ENCODE measurements at regions of chr14 and their contacts with region 1.

Region 1: GRCh38 chr14:35046048-35046741 is at the start of gene FAM177A1:
- DNase-seq: peak; percentile 92 to 96 (median 93)
- ATAC-seq: peak; percentile 96
- H3K4me3 ChIP-seq: peak within 1 kb of the TSS; percentile 69
- H3K27ac ChIP-seq: peak within 1 kb of the TSS; percentile 86
- H3K4me1 ChIP-seq: peaks cover 9 to 16% of the 10 kb centered on the region in 2 experiments; a peak in 4 of 5 replicates
- H3K27me3 ChIP-seq: no peaks in the 10 kb centered on the region
- CTCF ChIP-seq: no peak
- EP300 ChIP-seq: no peak
- POLR2A ChIP-seq: peak; percentile 88
- RAD21 ChIP-seq: no peak
- polyA plus RNA-seq, gene FAM177A1: 7.7 to 12.1 TPM

Region 2: DNA sequence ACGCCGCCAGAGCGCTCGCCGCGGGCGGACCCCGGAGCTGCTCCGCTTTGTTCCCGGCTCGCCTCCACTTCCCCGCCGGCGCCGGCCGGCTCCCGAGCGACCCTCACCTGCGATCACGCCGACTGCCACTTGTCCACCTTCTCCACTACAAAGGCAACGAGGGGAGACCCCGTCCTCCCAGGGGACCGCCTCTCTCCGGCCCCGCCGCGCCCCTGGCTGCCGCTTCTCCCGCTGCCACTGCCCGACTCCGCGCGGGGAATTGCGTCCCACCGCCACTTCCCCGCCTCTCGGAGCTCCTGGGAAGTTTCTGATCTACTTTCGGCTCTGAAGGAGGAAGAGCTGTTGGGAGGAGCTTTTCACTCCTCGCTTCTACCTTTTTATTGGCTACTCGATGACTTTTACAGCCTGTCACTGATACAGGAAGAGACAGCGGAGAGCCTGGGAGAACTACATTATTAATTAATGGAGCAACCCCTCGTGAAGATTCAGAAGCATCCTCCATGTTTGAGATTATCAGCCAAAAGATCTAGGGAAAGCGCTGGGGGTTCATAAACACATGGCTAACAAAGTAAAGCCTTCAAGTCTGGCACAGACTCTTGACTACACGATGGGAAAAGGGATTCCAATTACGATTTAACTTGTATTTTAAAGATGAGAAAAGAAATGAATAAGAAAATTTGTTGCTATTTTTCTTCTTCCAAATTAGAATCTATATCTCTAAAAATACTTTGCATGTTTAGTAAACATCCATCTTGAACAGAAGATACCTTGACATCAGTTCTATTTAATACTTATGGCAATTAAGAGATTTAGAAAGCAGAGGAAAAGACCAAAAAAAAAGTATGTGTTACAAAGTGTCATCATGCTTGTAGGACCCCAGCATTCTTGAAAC is 170.9 kb before region 1 on chr14 and contains the start of gene BAZ1A:
- CTCF ChIA-PET with region 1: no interaction called
- POLR2A ChIA-PET with region 1: interaction called, 4 read pairs
- in situ Hi-C with region 1: no loop called
- intact Hi-C with region 1: loop called (anchors 1 kb)
- DNase-seq: peak; percentile 69 to 81 (median 70)
- ATAC-seq: peak; percentile 44
- H3K4me3 ChIP-seq: peak within 1 kb of the TSS; percentile 96
- H3K27ac ChIP-seq: peak within 1 kb of the TSS; percentile 98
- H3K4me1 ChIP-seq: peaks cover 6 to 11% of the 10 kb centered on the region in 2 experiments; a peak in 4 of 5 replicates
- H3K27me3 ChIP-seq: no peaks in the 10 kb centered on the region
- CTCF ChIP-seq: no peak
- EP300 ChIP-seq: no peak; the same call in 1 of the 2 replicates
- POLR2A ChIP-seq: peak; percentile 90
- RAD21 ChIP-seq: no peak
- polyA plus RNA-seq, gene BAZ1A: 22.0 to 23.6 TPM

Region 3: GRCh38 chr14:34888186-34888585 is 158.0 kb before region 1 on chr14:
- CTCF ChIA-PET with region 1: no interaction called
- POLR2A ChIA-PET with region 1: no interaction called
- in situ Hi-C with region 1: no loop called
- intact Hi-C with region 1: no loop called
- DNase-seq: no peak
- ATAC-seq: no peak
- H3K4me3 ChIP-seq: no peak overlapping the region
- H3K27ac ChIP-seq: no peak overlapping the region
- H3K4me1 ChIP-seq: no peaks in the 10 kb centered on the region
- H3K27me3 ChIP-seq: no peaks in the 10 kb centered on the region
- CTCF ChIP-seq: no peak
- EP300 ChIP-seq: no peak
- POLR2A ChIP-seq: no peak
- RAD21 ChIP-seq: no peak

Region 4: GRCh38 chr14:34982417-34983147 is 63.6 kb before region 1 on chr14 and contains the start of gene SRP54:
- CTCF ChIA-PET with region 1: no interaction called
- POLR2A ChIA-PET with region 1: interaction called, 3 read pairs
- in situ Hi-C with region 1: no loop called
- intact Hi-C with region 1: loop called (anchors 1 kb)
- DNase-seq: peak; percentile 94 to 97 (median 96)
- ATAC-seq: peak; percentile 88
- H3K4me3 ChIP-seq: peak within 1 kb of the TSS; percentile 59
- H3K27ac ChIP-seq: peak within 1 kb of the TSS; percentile 97
- H3K4me1 ChIP-seq: peaks cover 4 to 6% of the 10 kb centered on the region in 2 experiments; a peak in 4 of 5 replicates
- H3K27me3 ChIP-seq: no peaks in the 10 kb centered on the region
- CTCF ChIP-seq: peak in 1 of 3 experiments; percentile 35; a peak in 2 of 6 replicates
- EP300 ChIP-seq: peak; percentile 25; the same call in 1 of the 2 replicates
- POLR2A ChIP-seq: peak; percentile 86
- RAD21 ChIP-seq: no peak
- polyA plus RNA-seq, gene SRP54: 44.1 to 64.5 TPM

Region 5: DNA sequence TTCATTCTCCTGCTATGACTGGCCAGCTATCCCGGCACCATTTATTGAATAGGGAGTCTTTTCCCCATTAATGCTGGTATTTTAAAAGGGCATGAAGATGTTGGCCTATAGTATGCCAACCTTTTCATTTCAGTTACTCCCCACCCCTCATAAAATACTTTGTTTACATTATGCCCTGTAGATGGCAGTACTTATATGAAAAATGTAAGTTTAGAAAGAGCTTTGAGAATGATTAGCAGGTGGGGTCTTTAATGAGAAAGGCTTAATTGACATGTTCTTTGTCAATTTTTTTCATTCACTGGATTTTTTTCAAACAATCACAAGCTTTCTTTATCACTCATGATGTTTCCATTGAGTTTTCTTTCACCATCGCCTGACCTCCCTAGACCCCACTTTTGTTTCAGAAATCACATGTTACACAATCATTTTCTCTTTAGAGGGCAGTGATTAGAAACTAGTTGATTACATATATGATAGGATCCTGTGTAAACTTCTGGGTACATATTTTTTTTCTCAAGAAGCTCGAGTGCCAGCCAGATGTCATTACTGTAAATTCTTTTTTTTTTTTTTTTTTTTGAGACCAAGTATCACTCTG is 183.4 kb after region 1 on chr14:
- CTCF ChIA-PET with region 1: no interaction called
- POLR2A ChIA-PET with region 1: no interaction called
- in situ Hi-C with region 1: no loop called
- intact Hi-C with region 1: no loop called
- DNase-seq: peak; percentile 3 to 14 (median 14)
- ATAC-seq: no peak
- H3K4me3 ChIP-seq: no peak overlapping the region
- H3K27ac ChIP-seq: no peak overlapping the region
- H3K4me1 ChIP-seq: no peaks in the 10 kb centered on the region
- H3K27me3 ChIP-seq: no peaks in the 10 kb centered on the region
- CTCF ChIP-seq: peak; percentile 5 to 49 (median 29); a peak in 3 of 6 replicates
- EP300 ChIP-seq: no peak
- POLR2A ChIP-seq: no peak
- RAD21 ChIP-seq: peak; percentile 56 to 60